IMR-90 (cell line): ENCODE measurements at regions of chr6 and their contacts with region 1.

Region 1: DNA sequence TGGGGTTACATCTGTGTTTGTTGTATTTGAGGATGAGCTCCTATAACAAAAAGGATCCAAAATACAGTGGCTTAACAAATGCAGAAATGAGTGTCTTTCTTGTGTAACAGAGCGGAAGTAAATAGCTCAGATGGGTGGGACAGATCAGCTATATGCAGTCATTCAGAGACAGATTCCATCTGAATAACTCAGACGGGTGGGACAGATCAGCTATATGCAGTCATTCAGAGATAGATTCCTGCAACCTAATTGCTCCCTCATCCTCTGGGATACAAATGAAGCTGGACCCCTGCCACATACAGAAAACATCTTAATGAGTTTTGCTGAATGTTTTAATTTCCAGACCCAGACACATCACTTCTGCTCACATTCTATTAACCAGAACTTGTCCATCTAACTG is 332.3 kb downstream of the BCKDHB start:
- DNase-seq: peak; percentile 90
- ATAC-seq: peak; percentile 94
- H3K4me3 ChIP-seq: no peak overlapping the region
- H3K27ac ChIP-seq: no peak overlapping the region
- H3K4me1 ChIP-seq: peaks cover 7% of the 10 kb centered on the region
- H3K27me3 ChIP-seq: no peaks in the 10 kb centered on the region
- CTCF ChIP-seq: no peak
- POLR2A ChIP-seq: no peak
- RAD21 ChIP-seq: no peak

Region 2: DNA sequence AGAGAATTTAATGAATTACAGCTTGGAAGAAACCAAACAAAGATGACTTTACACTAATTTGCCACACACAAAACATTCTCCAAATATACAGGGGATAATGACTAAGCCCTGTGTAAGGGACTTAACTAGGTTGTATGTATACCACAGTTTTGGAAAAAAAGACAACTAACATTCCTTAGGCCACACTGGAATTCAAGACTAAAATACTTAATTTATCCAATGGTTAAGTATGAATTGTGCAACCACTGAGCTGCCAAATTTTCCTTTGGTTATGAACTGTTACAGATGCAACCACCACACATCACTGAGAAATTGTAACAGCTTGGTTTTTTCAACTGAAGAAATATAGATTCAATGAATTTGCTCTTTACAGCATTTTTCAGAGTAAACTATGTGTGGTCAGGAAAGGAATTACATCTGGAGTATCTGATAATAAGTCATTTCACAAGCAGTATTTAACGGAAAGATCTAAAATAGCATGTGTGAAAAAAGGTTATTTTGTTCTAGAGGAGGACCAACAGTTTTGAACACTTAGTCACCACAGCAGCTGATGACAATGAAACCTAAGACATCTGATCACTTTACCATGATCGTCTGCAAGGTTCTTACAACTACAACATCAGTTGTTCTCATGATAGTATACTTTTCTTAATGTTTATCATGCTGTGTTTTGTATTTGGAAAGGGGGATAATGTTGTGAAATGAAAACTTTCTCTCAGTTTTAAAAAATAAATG is 13.5 kb before region 1 on chr6:
- CTCF ChIA-PET with region 1: interaction called, 3 read pairs
- POLR2A ChIA-PET with region 1: interaction called, 4 read pairs
- dilution Hi-C with region 1: no loop called
- in situ Hi-C with region 1: no loop called
- intact Hi-C with region 1: loop called (anchors 2 kb)
- DNase-seq: peak; percentile 99
- ATAC-seq: peak; percentile 98
- H3K4me3 ChIP-seq: no peak overlapping the region
- H3K27ac ChIP-seq: peak overlapping the region; percentile 90; the same call in 1 of the 2 replicates
- H3K4me1 ChIP-seq: peaks cover 7% of the 10 kb centered on the region
- H3K27me3 ChIP-seq: no peaks in the 10 kb centered on the region
- CTCF ChIP-seq: peak; percentile 24; the same call in 1 of the 2 replicates
- POLR2A ChIP-seq: no peak
- RAD21 ChIP-seq: peak; percentile 16; the same call in 1 of the 2 replicates

Region 3: DNA sequence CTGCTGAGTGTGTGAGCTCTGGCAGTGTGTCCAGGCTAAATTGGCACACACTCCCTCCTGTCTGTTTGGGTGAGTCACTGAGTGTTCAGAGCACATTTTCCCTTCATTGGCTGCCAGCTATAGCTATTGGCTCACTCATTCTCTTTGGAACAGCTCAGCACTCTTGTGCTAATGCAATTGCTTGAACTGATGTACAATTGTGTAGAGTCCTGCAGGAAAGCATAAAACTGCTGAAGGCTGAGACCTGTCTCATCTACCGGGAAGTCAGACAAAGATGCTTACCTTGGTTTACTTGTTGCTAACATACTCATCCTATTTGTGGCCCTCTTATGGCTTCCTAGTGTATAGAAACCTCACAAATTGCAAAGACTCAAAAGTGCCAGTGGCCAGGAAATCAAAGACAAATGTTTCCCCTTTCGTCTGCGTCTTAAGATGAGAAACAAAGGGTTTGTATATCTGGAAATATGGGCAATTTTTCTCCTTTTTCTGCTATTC is 18.7 kb after region 1 on chr6:
- CTCF ChIA-PET with region 1: no interaction called
- POLR2A ChIA-PET with region 1: no interaction called
- dilution Hi-C with region 1: no loop called
- in situ Hi-C with region 1: no loop called
- intact Hi-C with region 1: loop called (anchors 2 kb)
- DNase-seq: peak; percentile 98
- ATAC-seq: peak; percentile 94
- H3K4me3 ChIP-seq: no peak overlapping the region
- H3K27ac ChIP-seq: no peak overlapping the region
- H3K4me1 ChIP-seq: peaks cover 6% of the 10 kb centered on the region
- H3K27me3 ChIP-seq: no peaks in the 10 kb centered on the region
- CTCF ChIP-seq: no peak
- POLR2A ChIP-seq: no peak
- RAD21 ChIP-seq: peak; percentile 40